ENCODE measurements at regions of chr19 and their contacts with region 1.

Region 1: DNA sequence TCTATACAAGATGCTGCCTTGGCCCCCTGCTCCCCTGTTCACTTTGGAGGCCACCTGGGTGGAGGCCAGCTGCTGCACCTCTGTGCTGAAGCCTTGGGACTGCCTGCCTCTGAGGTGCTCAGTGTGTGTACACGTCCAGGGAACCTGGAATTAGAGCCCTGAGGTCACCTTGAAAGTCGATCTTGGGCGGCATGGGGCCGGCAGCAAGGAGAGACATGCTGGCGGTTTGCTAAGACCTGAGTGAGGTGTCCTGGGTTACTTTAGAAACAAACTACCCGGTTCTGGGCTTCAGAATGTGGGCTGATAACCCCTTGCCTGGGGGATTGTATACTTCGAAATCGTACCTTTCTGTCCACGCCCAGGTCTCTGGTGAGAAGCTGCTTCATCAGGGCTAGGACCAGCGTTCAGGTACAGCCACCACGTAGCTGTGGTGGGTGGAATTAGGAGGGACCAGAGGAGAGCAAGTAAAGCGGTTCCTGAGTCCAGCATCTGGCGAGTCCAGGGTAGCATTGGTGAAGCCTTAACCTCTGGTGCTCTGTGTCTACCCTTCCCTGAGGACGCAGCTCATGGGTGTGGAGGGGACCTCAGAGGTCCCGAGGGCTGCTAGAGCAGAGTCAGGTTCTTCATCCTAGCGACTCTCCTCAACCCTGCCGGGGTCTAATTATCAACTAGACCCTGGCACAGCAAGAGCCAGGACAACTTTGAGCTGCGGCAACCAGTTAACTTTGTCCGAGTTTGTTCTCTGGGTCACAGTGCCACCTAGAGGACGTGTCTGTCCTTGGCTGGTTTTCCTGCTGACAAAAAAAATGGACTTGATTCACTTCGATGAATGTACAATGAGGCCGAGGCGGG is 25.3 kb downstream of the TSSK6 start:
- DNase-seq: peak; percentile 75
- ATAC-seq: peak; percentile 69

Region 2: DNA sequence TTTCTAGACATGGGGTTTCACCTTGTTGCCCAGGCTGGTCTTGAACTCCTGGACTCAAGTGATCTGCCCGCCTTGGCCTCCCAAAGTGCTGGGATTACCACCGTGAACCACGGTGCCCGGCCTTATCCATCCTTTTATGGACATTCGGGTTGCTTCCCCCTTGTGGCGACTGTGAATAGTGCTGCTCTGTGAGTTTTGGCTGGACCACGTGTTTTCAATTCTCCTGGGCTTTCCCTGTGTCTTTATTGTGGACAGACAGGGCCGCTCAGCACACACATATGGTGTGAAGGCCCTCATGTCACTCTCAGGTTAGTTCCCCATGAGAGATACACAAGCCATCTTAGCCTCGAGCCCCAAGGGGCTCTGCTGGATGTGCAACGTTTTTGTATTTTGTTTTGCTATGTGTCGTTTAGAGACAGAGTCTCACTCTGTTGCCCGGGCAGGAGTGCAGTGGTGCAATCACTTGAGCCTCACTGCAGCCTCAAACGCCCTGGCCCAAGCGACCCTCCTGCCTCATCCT is 128.9 kb before region 1 on chr19:
- intact Hi-C with region 1: loop called (anchors 5 kb)
- DNase-seq: peak; percentile 80
- ATAC-seq: peak; percentile 80

Region 3: GRCh38 chr19:19444681-19445155 is 45.3 kb before region 1 on chr19:
- intact Hi-C with region 1: no loop called
- DNase-seq: no peak
- ATAC-seq: peak; percentile 48

Region 4: DNA sequence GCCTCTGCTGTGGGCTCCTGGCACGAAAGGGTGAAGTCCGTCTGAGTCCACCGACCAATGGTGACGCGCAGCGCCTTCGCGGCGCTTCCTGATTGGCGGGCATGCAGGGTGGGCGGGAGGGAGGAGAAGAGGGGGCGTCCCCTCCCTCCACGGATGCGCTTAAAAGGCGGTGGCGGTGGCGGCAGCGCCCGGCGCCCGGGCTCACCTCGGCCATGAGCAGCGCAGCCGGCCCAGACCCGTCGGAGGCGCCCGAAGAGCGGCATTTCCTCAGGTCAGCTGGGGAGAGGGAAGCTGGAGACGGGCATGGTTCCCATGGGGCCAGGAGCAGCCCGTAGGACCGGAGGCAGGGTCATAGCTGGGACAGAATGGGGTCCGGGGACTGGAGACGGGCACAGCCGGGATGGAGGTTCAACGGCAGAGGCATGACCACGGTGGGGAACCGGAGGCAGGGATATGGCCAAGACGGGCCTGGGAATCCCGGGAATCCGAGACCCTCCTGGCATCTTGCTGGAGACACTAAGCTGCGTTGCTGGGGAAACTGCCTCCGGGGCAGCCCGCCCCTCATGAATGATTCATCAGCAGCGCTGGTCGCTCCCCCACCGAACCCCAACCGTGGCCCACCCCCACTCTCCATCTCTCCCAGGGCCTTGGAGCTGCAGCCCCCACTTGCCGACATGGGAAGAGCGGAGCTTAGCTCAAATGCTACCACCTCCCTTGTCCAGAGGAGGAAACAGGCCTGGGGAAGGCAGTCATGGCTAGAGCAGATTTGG is 38.9 kb after region 1 on chr19 and contains the start of gene YJEFN3:
- intact Hi-C with region 1: no loop called
- DNase-seq: peak; percentile 71
- ATAC-seq: peak; percentile 51
- total RNA-seq, gene YJEFN3: 9.4 TPM

Region 5: GRCh38 chr19:19540715-19541440 is 50.8 kb after region 1 on chr19:
- intact Hi-C with region 1: no loop called
- DNase-seq: peak; percentile 57
- ATAC-seq: peak; percentile 14

Measured in left ventricle myocardium superior (tissue), 1 donor.